ENCODE measurements at regions of chr20 and their contacts with region 1.

Region 1: GRCh38 chr20:48828022-48828743 is 384 bp upstream of the PREX1 start:
- DNase-seq: peak; percentile 77 to 89
- ATAC-seq: peak; percentile 75 to 78
- H3K4me3 ChIP-seq: peak overlapping the region; percentile 84
- H3K27ac ChIP-seq: peak overlapping the region; percentile 92 to 98
- H3K4me1 ChIP-seq: peaks cover 37% of the 10 kb centered on the region
- CTCF ChIP-seq: no peak
- EP300 ChIP-seq: no peak; a peak in 1 of 5 replicates
- POLR2A ChIP-seq: peak; percentile 47; the same call in 1 of the 2 replicates
- RAD21 ChIP-seq: peak in 1 of 2 experiments; percentile 39; a peak in 2 of 5 replicates

Region 2: DNA sequence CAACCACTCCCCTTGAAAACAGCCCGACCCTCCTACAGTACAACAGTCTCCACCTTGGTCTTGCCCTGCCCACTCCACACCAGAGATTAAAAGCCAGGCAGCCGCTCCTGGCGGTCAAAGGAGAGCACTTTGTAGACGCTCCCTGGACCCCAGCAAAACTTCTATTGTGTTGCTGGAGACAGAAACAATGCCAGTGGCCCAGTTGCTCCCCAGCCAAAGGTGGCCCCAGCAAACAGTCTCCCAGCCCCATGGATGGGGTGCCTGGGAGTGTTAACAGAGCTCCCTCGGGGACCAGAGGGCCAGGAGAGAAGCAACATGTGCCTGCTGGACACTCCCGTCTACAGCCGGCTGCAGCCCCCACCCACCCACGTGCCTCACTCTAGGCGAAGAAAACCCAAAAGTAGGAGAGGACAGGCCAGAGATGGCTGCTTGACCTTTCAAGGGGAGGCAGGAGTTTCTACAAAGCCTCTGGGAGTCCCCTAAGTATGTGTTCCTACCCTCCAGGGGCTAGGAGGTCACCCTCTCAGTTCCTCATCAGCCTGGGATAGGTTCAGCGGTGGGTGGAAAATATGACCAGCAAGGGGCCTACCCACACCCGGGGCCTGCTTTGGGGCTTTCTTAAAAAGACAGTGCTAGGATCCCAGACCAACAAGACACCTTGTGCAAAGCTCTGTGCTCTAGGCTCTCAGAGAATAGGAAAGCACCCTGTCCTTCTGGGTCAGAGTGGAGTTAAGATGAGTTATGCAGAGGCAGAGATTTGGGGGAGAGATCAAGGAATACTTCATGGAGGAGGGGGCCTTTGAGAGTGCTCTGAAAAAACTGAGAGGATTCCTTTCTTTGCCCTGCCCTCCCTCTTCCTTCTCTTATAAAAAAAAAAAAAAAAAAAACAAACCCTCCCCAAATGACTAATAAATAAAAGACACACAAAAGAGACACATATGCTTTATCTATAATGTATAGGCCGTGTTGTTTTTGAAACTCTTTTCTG is 18.6 kb after region 1 on chr20:
- CTCF ChIA-PET with region 1: interaction called, 8 read pairs
- POLR2A ChIA-PET with region 1: interaction called, 17 read pairs
- DNase-seq: peak in 1 of 2 experiments; percentile 54
- ATAC-seq: peak; percentile 54 to 76; a peak in 5 of 6 replicates
- H3K4me3 ChIP-seq: no peak overlapping the region
- H3K27ac ChIP-seq: peak overlapping the region; percentile 63 to 82
- H3K4me1 ChIP-seq: peaks cover 49% of the 10 kb centered on the region
- CTCF ChIP-seq: no peak
- EP300 ChIP-seq: no peak
- POLR2A ChIP-seq: no peak
- RAD21 ChIP-seq: 0 out of 5 replicates have a peak, but pooled peaks of 1 of the 2 experiments have one; percentile 8

Region 3: DNA sequence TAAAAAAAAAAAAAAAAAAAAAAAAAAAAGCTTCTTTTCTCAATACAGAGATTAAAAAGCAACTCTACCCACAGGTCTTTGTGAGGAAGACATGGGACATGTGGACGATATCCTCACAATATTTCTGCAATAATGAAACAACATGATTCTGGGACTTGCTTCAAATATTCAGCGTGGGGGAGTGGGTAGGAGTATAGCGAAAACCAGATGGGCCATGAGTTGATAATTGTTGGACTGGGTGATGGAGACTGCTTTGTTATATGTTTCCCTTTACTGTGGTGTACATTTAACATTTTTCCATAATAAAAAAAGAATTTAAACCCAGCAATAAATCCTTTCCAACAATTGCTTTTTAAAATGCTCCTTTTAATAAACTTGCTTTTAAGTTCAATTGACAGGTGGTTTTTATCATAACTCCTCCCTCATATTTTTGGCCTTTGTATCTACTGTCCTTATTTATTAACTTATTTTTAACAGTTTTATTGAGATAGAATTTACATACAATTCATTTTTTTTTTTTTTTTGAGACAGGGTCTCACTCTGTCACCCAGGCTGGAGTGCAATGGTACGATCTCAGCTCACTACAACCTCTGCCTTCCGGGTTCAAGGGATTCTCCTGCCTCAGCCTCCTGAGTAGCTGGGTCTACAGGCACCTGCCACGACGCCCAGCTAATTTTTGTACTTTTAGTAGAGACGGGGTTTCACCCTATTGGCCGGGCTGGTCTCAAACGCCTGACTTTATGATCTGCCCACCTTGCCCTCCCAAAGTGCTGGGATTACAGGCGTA is 53.0 kb after region 1 on chr20:
- CTCF ChIA-PET with region 1: no interaction called
- POLR2A ChIA-PET with region 1: no interaction called
- DNase-seq: no peak
- ATAC-seq: no peak
- H3K4me3 ChIP-seq: no peak overlapping the region
- H3K27ac ChIP-seq: no peak overlapping the region
- H3K4me1 ChIP-seq: peaks cover 10% of the 10 kb centered on the region; the same call in 2 of the 3 replicates
- CTCF ChIP-seq: no peak
- EP300 ChIP-seq: no peak
- POLR2A ChIP-seq: no peak
- RAD21 ChIP-seq: no peak

Region 4: GRCh38 chr20:48897246-48897994 is 69.2 kb after region 1 on chr20:
- CTCF ChIA-PET with region 1: interaction called, 3 read pairs
- POLR2A ChIA-PET with region 1: interaction called, 15 read pairs
- DNase-seq: peak; percentile 70 to 80
- ATAC-seq: peak; percentile 94 to 97
- H3K4me3 ChIP-seq: no peak overlapping the region
- H3K27ac ChIP-seq: peak overlapping the region; percentile 51 to 79
- H3K4me1 ChIP-seq: peaks cover 19% of the 10 kb centered on the region
- CTCF ChIP-seq: no peak
- EP300 ChIP-seq: no peak; a peak in 1 of 5 replicates
- POLR2A ChIP-seq: no peak
- RAD21 ChIP-seq: no peak

Region 5: DNA sequence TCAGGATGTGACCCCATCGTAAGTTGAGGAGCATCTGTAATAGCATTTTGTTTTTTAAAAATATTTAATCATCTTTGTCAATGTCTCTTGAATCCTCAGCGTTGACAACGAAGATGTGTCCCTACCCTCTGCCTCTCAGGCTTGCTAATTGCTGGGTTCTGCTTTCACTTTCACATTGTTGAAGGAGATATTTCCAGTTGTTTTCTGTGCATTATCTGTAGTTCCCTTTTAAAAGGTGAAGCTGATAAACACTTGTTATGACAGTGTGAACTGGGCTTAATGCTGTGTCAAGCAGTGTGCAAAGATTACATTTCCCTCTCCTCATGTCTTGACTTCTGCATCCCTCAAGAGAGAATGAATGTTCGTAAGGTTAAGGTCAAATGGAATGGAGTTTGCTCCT is 272.8 kb after region 1 on chr20:
- CTCF ChIA-PET with region 1: no interaction called
- POLR2A ChIA-PET with region 1: no interaction called
- DNase-seq: no peak
- ATAC-seq: no peak
- H3K4me3 ChIP-seq: no peak overlapping the region
- H3K27ac ChIP-seq: no peak overlapping the region
- H3K4me1 ChIP-seq: no peaks in the 10 kb centered on the region
- CTCF ChIP-seq: no peak
- EP300 ChIP-seq: no peak
- POLR2A ChIP-seq: no peak
- RAD21 ChIP-seq: no peak

Measured in A549 (cell line).